ENCODE measurements at regions of chr5 and their contacts with region 1.

Region 1: DNA sequence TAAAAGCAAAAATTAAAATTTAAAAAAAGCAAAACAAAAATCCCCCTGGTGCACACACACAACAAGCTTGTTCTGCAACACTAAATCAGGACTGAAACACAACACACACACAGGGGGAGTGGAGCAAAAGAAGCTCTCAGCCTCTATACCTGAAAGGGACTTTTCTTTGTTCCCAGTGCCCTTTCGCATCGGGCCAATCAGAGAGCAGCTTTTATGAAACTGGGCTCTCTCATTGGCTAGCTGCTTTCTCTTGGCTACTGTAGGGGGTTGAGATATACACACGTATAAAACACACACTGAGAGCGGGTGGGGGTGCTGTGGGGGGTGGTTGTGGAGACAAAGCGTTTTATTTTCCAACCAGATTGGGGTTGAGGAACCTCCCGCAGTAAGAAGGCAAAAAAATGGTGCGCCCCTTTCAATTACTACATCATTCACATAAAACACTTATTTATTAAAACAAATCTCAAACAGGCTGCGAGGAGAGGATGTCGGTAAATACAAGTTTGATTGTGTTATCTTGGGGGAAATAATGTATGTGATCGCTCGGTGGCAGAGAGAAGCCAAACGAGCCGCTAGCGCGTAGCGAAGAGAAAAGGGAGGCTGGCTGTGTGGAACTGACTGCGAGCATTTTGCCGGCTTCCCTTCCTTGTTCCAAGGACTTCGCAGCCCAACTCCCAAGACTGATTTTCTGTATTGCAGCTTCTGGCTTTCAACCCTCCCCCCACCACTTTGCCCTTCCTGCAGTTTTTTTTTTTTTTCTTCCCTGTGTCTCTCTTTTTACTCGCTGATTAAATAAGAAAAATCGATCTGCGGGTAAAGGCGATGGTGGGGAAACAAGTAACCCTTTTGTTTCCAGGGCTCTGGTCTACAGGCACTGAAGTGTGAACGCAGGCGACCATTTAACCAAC is 2.5 kb upstream of the ZNF608 start:
- DNase-seq: peak; percentile 37
- ATAC-seq: peak; percentile 71
- H3K4me3 Mint-ChIP-seq: no peak overlapping the region
- H3K27ac Mint-ChIP-seq: no peak overlapping the region
- H3K4me1 Mint-ChIP-seq: peaks cover 17% of the 10 kb centered on the region
- H3K27me3 Mint-ChIP-seq: no peaks in the 10 kb centered on the region
- CTCF ChIP-seq: no peak

Region 2: GRCh38 chr5:124157320-124157719 is 591.6 kb before region 1 on chr5:
- CTCF ChIA-PET with region 1: no interaction called
- POLR2A ChIA-PET with region 1: no interaction called
- intact Hi-C with region 1: loop called (anchors 5 kb)
- DNase-seq: no peak
- ATAC-seq: peak; percentile 61
- H3K4me3 Mint-ChIP-seq: peak overlapping the region; percentile 84
- H3K27ac Mint-ChIP-seq: peak overlapping the region; percentile 89
- H3K4me1 Mint-ChIP-seq: peaks cover 52% of the 10 kb centered on the region
- H3K27me3 Mint-ChIP-seq: no peaks in the 10 kb centered on the region
- CTCF ChIP-seq: no peak

Region 3: DNA sequence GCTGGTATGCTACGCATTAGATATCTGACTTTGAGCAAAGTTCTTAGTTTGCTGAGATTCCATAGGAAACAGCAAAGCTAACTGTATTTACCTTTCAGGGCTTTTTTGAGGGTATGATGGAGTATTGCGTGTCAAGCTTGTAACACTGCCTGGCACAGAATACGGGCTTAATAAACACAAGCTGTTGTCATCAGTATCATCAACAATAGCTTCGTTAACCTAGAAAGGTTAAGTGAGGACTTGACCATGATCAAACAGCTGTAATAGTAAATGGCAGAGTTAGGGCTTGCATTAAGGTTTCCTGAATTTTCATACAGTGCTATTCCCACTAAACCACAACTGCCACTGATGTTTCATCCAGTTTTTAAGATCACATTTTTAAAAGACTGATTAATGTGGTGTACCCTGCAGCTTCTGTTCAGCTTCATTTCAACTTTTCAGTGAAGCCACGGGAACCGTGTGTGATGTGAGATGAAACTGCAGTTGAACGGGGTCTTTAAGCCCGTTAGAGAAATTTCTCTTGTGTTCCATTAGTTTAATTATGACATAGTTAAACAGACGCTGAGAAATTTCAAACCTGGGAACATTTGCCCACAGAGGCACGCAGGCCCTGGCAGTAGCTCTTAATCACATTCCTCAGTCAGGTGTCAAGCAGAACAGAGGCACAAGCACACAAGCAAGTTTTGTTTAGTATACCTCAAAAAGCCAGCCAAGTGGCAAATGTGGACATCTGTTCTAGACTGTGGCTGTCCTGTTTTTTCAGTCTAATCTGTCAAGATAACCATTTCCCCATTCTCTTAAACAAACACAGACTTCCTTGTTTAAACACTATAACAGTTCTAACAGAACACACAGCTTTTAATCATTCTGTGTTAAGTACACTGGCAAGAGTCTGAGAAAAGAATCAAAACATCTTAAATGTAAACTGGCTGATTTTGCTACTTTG is 149.6 kb before region 1 on chr5:
- CTCF ChIA-PET with region 1: no interaction called
- POLR2A ChIA-PET with region 1: interaction called, 10 read pairs
- intact Hi-C with region 1: loop called (anchors 5 kb)
- DNase-seq: no peak
- ATAC-seq: peak; percentile 77
- H3K4me3 Mint-ChIP-seq: peak overlapping the region; percentile 50
- H3K27ac Mint-ChIP-seq: peak overlapping the region; percentile 56
- H3K4me1 Mint-ChIP-seq: peaks cover 38% of the 10 kb centered on the region
- H3K27me3 Mint-ChIP-seq: no peaks in the 10 kb centered on the region
- CTCF ChIP-seq: no peak

Region 4: GRCh38 chr5:124725040-124725434 is 23.9 kb before region 1 on chr5:
- CTCF ChIA-PET with region 1: interaction called, 5 read pairs
- POLR2A ChIA-PET with region 1: interaction called, 22 read pairs
- intact Hi-C with region 1: no loop called
- DNase-seq: no peak
- ATAC-seq: peak; percentile 77
- H3K4me3 Mint-ChIP-seq: peak overlapping the region; percentile 83
- H3K27ac Mint-ChIP-seq: peak overlapping the region; percentile 84
- H3K4me1 Mint-ChIP-seq: peaks cover 53% of the 10 kb centered on the region
- H3K27me3 Mint-ChIP-seq: no peaks in the 10 kb centered on the region
- CTCF ChIP-seq: no peak

Region 5: DNA sequence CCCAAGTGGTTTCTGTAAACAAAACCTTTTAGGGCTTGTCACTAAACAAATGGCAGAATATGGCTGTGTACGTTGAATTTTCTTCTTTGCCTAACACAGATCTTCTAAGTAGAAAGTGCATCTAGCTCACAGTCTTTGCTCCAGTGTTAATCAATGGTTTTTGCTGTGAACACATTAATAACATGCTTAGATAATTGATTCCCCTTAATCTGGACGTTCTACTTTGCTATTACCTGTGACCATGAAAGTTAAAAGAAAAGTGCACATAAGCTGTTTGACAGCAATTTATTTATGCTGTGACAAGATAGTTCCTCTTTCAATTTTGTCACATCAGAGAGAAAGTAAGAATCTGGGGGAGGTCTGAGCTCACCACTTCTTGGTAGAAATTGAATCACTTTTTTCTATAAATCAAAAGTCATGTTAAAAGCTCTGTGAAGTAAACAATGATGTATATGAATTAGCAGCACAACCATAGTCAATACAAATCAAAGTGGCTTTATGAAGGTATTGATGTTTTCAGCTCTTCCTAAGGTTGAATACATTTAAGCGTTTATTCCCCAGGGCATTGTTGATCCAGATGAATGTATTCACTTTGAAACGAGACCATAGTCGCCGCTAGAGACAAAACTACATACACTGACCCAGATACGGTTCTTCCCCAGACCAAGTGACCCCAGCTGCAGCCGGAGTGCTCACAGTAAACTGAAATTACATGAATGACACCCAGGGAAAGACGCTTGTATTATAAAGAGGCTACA is 172.1 kb after region 1 on chr5:
- CTCF ChIA-PET with region 1: interaction called, 7 read pairs
- POLR2A ChIA-PET with region 1: interaction called, 30 read pairs
- intact Hi-C with region 1: loop called (anchors 1 kb)
- DNase-seq: no peak
- ATAC-seq: peak; percentile 83
- H3K4me3 Mint-ChIP-seq: no peak overlapping the region
- H3K27ac Mint-ChIP-seq: no peak overlapping the region
- H3K4me1 Mint-ChIP-seq: peaks cover 10% of the 10 kb centered on the region
- H3K27me3 Mint-ChIP-seq: no peaks in the 10 kb centered on the region
- CTCF ChIP-seq: no peak

Region 6: DNA sequence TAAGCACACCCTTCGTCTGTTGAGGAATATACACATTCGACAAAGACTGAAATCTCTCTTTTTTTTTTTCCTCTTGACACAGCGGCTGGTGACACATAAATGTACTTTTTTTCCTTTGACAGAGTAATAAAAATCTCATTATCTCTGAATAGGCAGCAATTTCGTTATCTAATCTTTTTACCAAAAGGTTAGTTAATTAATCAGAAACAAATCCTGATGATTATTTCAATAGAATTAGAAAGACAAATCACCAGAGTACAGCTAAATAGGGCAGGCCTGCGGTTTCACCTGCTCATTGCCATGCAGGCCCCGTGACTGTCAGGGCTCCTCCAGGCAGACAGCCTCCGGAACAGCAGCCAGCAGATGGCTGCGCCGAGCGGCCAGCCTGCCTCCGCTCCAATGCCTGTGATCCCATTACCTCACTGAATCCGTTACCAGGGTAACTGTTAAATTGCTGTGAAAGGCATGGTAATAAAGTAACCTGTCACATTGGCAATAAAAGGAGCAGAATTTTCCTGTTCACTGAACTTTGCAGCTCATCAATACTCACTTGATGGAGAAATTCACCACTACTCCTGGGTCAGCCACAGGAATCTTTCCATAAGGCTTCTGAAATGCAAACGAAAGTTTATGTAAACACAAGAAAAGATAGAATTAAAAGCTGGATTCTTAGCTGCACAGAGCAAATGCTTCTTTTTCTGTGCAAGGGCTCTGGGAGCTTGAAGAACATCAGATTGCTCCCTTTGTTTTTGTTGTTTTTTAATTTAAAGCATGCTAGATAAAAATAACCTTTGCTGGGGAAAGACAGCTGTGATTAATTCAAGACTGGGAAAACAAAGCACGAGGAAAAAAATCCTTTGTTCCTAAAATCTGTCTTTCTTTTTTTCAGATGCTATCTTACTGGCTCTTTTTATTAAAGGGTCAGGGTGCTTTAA is 663.9 kb after region 1 on chr5:
- CTCF ChIA-PET with region 1: interaction called, 3 read pairs
- POLR2A ChIA-PET with region 1: interaction called, 4 read pairs
- intact Hi-C with region 1: loop called (anchors 2 kb)
- DNase-seq: peak; percentile 18
- ATAC-seq: peak; percentile 72
- H3K4me3 Mint-ChIP-seq: peak overlapping the region; percentile 29
- H3K27ac Mint-ChIP-seq: no peak overlapping the region
- H3K4me1 Mint-ChIP-seq: peaks cover 38% of the 10 kb centered on the region
- H3K27me3 Mint-ChIP-seq: no peaks in the 10 kb centered on the region
- CTCF ChIP-seq: no peak

Measured in activated B cell treated with CpG ODN at 0.5 μM for 24 hours (primary cell).